ENCODE measurements at regions of chr3 and their contacts with region 1.

Region 1: DNA sequence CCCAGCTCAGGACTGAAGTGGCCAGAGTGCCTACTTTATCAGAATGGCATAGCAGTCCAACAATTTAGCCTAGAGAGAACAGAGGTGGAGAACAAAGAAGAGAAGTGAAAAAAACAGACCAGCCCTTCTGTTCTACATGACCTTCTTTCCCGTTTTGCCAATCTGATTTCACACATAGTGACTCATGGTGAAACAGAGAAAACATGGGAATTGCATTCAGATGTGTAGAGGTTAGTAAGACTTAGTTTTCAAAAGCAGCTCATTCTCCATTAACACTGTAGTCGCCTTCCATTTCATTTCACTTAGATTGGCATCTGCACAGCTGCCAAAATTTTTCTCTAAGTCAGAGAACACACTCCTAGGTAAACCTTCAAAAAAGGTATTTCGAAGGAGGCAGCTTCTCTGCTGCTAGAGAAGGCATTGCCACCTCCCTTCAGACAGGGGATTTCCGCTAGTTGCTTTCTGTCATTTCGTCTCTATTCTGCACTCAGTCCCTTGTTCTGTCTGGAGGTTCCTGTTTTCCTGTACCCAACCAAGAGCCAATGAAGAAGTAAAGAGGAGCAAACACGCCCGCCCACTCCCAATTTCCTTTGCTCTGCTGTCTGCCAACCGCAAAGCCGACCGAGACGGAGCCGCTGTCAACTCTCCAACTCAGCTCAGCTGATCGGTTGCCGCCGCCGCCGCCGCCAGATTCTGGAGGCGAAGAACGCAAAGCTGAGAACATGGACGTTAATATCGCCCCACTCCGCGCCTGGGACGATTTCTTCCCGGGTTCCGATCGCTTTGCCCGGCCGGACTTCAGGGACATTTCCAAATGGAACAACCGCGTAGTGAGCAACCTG is at the start of gene ARL6IP5:
- DNase-seq: peak; percentile 93
- ATAC-seq: peak; percentile 58
- H3K4me3 ChIP-seq: peak within 1 kb of the TSS; percentile 98
- H3K27ac ChIP-seq: peak within 1 kb of the TSS; percentile 75
- H3K4me1 ChIP-seq: peaks cover 31% of the 10 kb centered on the region
- H3K27me3 ChIP-seq: no peaks in the 10 kb centered on the region
- CTCF ChIP-seq: no peak
- EP300 ChIP-seq: peak; percentile 22 to 65; a peak in 1 of 4 replicates
- POLR2A ChIP-seq: peak; percentile 59
- RAD21 ChIP-seq: no peak
- polyA plus RNA-seq, gene ARL6IP5: 269 to 310 TPM

Region 2: GRCh38 chr3:67654099-67654843 is 1430.3 kb before region 1 on chr3 and contains the start of gene SUCLG2:
- CTCF ChIA-PET with region 1: no interaction called
- POLR2A ChIA-PET with region 1: no interaction called
- RAD21 ChIA-PET with region 1: no interaction called
- SMC1A ChIA-PET with region 1: no interaction called
- in situ Hi-C with region 1: no loop called
- intact Hi-C with region 1: loop called (anchors 10 kb)
- DNase-seq: no peak
- ATAC-seq: peak; percentile 90
- H3K4me3 ChIP-seq: peak within 1 kb of the TSS; percentile 94
- H3K27ac ChIP-seq: peak within 1 kb of the TSS; percentile 94
- H3K4me1 ChIP-seq: peaks cover 37% of the 10 kb centered on the region
- H3K27me3 ChIP-seq: no peaks in the 10 kb centered on the region
- CTCF ChIP-seq: no peak
- EP300 ChIP-seq: no peak
- POLR2A ChIP-seq: peak; percentile 93
- RAD21 ChIP-seq: no peak
- polyA plus RNA-seq, gene SUCLG2: 17.8 to 31.1 TPM

Region 3: GRCh38 chr3:69013253-69014021 is 71.1 kb before region 1 on chr3 and contains the start of gene EOGT:
- CTCF ChIA-PET with region 1: interaction called, 4 read pairs
- POLR2A ChIA-PET with region 1: no interaction called
- RAD21 ChIA-PET with region 1: interaction called, 10 read pairs
- SMC1A ChIA-PET with region 1: interaction called, 6 read pairs
- in situ Hi-C with region 1: no loop called
- intact Hi-C with region 1: loop called (anchors 5 kb)
- DNase-seq: peak; percentile 15
- ATAC-seq: peak; percentile 86
- H3K4me3 ChIP-seq: peak within 1 kb of the TSS; percentile 87
- H3K27ac ChIP-seq: peak within 1 kb of the TSS; percentile 64
- H3K4me1 ChIP-seq: peaks cover 7% of the 10 kb centered on the region; the same call in 1 of the 2 replicates
- H3K27me3 ChIP-seq: no peaks in the 10 kb centered on the region
- CTCF ChIP-seq: peak; percentile 43 to 80 (median 71)
- EP300 ChIP-seq: no peak
- POLR2A ChIP-seq: peak; percentile 82
- RAD21 ChIP-seq: 0 out of 2 replicates have a peak, but pooled peaks have one; percentile 9
- polyA plus RNA-seq, gene EOGT: 3.5 to 4.3 TPM

Region 4: GRCh38 chr3:69051756-69052471 is 32.6 kb before region 1 on chr3 and contains the start of gene TMF1:
- CTCF ChIA-PET with region 1: interaction called, 7 read pairs
- POLR2A ChIA-PET with region 1: interaction called, 30 read pairs
- RAD21 ChIA-PET with region 1: interaction called, 152 read pairs
- SMC1A ChIA-PET with region 1: interaction called, 234 read pairs
- in situ Hi-C with region 1: no loop called
- intact Hi-C with region 1: loop called (anchors 2 kb)
- DNase-seq: peak; percentile 97
- ATAC-seq: peak; percentile 92
- H3K4me3 ChIP-seq: peak within 1 kb of the TSS; percentile 98
- H3K27ac ChIP-seq: peak within 1 kb of the TSS; percentile 73
- H3K4me1 ChIP-seq: peaks cover 3% of the 10 kb centered on the region; the same call in 1 of the 2 replicates
- H3K27me3 ChIP-seq: no peaks in the 10 kb centered on the region
- CTCF ChIP-seq: no peak
- EP300 ChIP-seq: no peak
- POLR2A ChIP-seq: peak; percentile 89
- RAD21 ChIP-seq: no peak
- polyA plus RNA-seq, gene TMF1: 7.1 to 7.9 TPM

Region 5: GRCh38 chr3:69097407-69098086 is 13.0 kb after region 1 on chr3:
- CTCF ChIA-PET with region 1: interaction called, 7 read pairs
- POLR2A ChIA-PET with region 1: interaction called, 26 read pairs
- RAD21 ChIA-PET with region 1: interaction called, 78 read pairs
- SMC1A ChIA-PET with region 1: interaction called, 72 read pairs
- in situ Hi-C with region 1: no loop called
- intact Hi-C with region 1: no loop called
- DNase-seq: no peak
- ATAC-seq: no peak
- H3K4me3 ChIP-seq: no peak overlapping the region
- H3K27ac ChIP-seq: no peak overlapping the region
- H3K4me1 ChIP-seq: peaks cover 33% of the 10 kb centered on the region
- H3K27me3 ChIP-seq: no peaks in the 10 kb centered on the region
- CTCF ChIP-seq: no peak
- EP300 ChIP-seq: no peak
- POLR2A ChIP-seq: no peak
- RAD21 ChIP-seq: no peak

Region 6: GRCh38 chr3:69137011-69137410 is 52.5 kb after region 1 on chr3:
- CTCF ChIA-PET with region 1: no interaction called
- POLR2A ChIA-PET with region 1: no interaction called
- RAD21 ChIA-PET with region 1: no interaction called
- SMC1A ChIA-PET with region 1: no interaction called
- in situ Hi-C with region 1: no loop called
- intact Hi-C with region 1: no loop called
- DNase-seq: no peak
- ATAC-seq: no peak
- H3K4me3 ChIP-seq: no peak overlapping the region
- H3K27ac ChIP-seq: no peak overlapping the region
- H3K4me1 ChIP-seq: no peaks in the 10 kb centered on the region
- H3K27me3 ChIP-seq: no peaks in the 10 kb centered on the region
- CTCF ChIP-seq: no peak
- EP300 ChIP-seq: no peak
- POLR2A ChIP-seq: no peak
- RAD21 ChIP-seq: no peak

Region 7: DNA sequence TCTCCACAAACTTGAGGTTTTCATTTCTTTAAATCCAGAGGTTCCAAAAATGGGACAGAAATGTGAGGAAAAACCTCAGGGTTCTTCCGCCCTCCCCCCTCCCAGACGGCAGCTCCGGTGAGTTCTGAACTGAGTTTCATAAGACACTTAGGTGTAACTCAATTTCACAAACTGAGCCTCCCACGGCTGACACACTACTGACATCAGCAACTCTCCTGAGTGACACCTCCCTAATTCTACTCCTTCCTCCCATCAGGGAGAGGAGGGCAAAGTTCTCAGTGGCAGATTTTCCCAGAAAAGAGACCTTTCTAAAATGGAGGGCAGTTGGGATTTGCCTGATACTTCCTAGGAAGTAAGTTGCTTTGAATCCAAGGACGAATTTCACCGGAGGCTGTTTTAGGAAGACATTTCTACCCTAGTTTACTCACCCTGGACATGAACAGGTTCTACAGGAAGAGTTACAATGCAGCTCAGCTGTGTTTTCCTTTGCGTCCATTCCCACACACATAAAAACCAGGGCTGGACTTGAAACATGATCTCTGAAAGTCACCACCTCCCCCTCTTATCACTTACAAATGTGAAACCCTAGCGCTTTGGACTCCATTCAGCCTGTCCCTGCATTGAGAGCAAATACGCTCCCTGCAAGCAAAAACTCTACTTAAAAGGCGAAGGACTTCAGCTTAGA is 116.0 kb after region 1 on chr3:
- CTCF ChIA-PET with region 1: no interaction called
- POLR2A ChIA-PET with region 1: interaction called, 6 read pairs
- RAD21 ChIA-PET with region 1: no interaction called
- SMC1A ChIA-PET with region 1: interaction called, 4 read pairs
- in situ Hi-C with region 1: no loop called
- intact Hi-C with region 1: loop called (anchors 5 kb)
- DNase-seq: no peak
- ATAC-seq: peak; percentile 38
- H3K4me3 ChIP-seq: no peak overlapping the region
- H3K27ac ChIP-seq: no peak overlapping the region
- H3K4me1 ChIP-seq: peaks cover 10% of the 10 kb centered on the region
- H3K27me3 ChIP-seq: no peaks in the 10 kb centered on the region
- CTCF ChIP-seq: no peak
- EP300 ChIP-seq: no peak
- POLR2A ChIP-seq: no peak
- RAD21 ChIP-seq: no peak